Tibial artery (tissue), 4 donors: ENCODE measurements at regions of chr16 and their contacts with region 1.

Region 1: DNA sequence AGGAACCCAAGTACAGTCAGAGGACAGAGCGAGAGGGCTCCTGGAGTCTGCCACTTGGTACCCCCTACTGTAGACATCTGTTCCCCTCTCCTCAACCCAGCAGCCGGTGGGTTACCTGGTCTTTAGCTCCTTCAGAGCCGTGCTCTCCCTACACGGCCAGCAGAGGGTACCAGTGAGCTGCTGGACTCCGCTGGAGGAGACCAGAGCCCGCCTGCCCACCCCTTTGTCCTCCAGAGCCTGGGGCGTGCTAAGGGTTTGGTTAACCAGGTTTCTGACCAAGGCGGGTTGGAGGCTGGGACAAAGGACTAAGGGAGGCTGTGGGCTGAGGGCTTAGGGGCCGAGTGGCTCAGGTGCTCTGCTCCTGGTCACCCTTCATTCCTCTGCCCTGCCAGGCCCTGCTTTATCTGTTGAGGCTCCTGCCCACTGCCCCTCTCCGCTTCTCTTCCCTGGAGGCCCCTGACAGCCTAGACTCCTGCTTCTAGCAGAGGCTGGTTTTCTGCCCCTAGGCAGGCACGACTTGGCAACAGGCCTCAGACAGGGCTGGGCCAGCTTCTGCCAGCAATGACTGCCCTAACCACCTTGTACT is 2.7 kb upstream of the HSD11B2 start:
- DNase-seq: peak in 1 of 2 donors; percentile 50
- H3K4me3 ChIP-seq: no peak overlapping the region
- H3K27ac ChIP-seq: no peak overlapping the region
- H3K4me1 ChIP-seq: peaks cover 6 to 36% (median 14%) of the 10 kb centered on the region in 4 donors
- H3K27me3 ChIP-seq: peaks cover 0 to 60% of the 10 kb centered on the region in 2 donors
- CTCF ChIP-seq: peak; percentile 66 to 72

Region 2: DNA sequence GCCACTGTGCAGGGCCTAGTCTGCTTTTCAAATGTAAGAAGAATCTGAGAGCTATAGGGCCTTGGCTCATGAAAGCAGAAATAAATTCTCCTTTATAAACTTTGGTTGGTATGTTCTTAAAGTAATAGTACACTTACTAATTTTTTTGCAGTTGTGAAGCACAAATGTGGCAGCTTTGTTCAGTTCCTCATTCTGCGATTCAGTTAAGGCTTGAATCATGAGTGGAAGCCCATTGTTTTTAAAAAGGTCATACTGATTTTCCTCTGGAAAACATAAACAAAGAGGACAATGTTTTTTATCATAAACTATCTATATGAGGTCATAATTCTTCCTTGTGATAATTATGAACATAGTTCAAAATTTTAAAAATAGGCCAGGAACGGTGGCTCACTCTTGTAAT is 653.3 kb before region 1 on chr16:
- intact Hi-C with region 1: loop called (anchors 5 kb)
- DNase-seq: no peak
- H3K4me3 ChIP-seq: no peak overlapping the region
- H3K27ac ChIP-seq: no peak overlapping the region
- H3K4me1 ChIP-seq: no peaks in the 10 kb centered on the region
- H3K27me3 ChIP-seq: no peaks in the 10 kb centered on the region
- CTCF ChIP-seq: no peak

Region 3: GRCh38 chr16:67317853-67318252 is 110.4 kb before region 1 on chr16:
- intact Hi-C with region 1: no loop called
- DNase-seq: no peak
- H3K4me3 ChIP-seq: no peak overlapping the region
- H3K27ac ChIP-seq: no peak overlapping the region
- H3K4me1 ChIP-seq: no peaks in the 10 kb centered on the region
- H3K27me3 ChIP-seq: peaks cover 0 to 34% of the 10 kb centered on the region in 2 donors
- CTCF ChIP-seq: no peak

Region 4: DNA sequence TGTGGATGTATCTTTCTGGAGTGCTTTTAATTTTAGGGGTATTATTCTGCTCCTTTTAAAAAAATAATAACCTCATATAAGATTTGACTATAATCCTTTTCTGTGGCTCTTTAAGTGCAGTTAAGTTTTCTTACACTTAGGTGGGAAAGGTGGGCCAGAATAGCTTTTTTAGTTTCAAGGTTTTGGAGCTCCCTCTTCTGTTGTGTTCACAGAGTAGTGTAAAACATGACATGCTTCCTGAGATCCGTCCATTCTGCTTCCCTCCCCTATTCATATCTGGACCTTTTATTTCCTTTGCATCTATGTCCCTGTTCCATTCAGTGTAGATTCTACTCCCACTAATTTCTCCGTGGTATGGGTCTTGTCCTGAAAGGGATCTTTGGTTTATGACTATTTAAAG is 88.8 kb before region 1 on chr16:
- intact Hi-C with region 1: no loop called
- DNase-seq: no peak
- H3K4me3 ChIP-seq: no peak overlapping the region
- H3K27ac ChIP-seq: no peak overlapping the region
- H3K4me1 ChIP-seq: no peaks in the 10 kb centered on the region
- H3K27me3 ChIP-seq: peaks cover 0 to 2% of the 10 kb centered on the region in 2 donors
- CTCF ChIP-seq: no peak

Region 5: DNA sequence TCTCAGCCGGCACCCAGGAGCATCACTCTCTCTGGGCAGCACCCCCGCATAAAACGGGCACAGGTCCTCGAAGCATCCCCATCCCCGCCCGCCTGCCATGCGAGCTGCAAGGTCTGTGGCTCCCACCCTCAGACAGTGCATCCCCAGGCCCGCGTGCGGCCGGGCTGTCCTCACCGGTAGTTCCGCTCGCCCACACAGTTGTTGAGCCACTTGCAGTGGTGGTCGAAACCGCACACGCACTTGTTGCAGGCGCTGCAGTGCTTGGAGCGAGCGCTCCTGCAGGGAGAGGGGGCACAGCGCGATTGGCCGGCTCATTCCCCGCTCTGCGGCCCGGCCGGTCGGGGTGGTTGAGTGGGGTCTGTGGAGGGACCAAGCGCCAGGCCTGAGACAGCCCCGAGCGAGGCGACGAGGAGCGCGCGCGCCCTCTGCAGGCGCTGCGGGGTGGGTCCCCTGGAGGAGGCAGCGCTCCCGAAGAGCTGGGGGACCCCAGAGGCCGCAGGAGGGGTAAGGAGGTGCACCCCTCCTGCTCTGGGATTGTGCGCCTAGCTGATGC is 29.0 kb before region 1 on chr16:
- intact Hi-C with region 1: no loop called
- DNase-seq: no peak
- H3K4me3 ChIP-seq: no peak overlapping the region
- H3K27ac ChIP-seq: no peak overlapping the region
- H3K4me1 ChIP-seq: peaks cover 0 to 52% (median 24%) of the 10 kb centered on the region in 4 donors
- H3K27me3 ChIP-seq: peaks cover 0 to 53% of the 10 kb centered on the region in 2 donors
- CTCF ChIP-seq: peak; percentile 38 to 45

Region 6: GRCh38 chr16:67461600-67462592 is 33.7 kb after region 1 on chr16:
- intact Hi-C with region 1: loop called (anchors 5 kb)
- DNase-seq: no peak
- H3K4me3 ChIP-seq: no peak overlapping the region
- H3K27ac ChIP-seq: no peak overlapping the region
- H3K4me1 ChIP-seq: peaks cover 0 to 80% (median 60%) of the 10 kb centered on the region in 4 donors
- H3K27me3 ChIP-seq: no peaks in the 10 kb centered on the region
- CTCF ChIP-seq: no peak